HCT116 (cell line): ENCODE measurements at regions of chr14 and their contacts with region 1.

Region 1: DNA sequence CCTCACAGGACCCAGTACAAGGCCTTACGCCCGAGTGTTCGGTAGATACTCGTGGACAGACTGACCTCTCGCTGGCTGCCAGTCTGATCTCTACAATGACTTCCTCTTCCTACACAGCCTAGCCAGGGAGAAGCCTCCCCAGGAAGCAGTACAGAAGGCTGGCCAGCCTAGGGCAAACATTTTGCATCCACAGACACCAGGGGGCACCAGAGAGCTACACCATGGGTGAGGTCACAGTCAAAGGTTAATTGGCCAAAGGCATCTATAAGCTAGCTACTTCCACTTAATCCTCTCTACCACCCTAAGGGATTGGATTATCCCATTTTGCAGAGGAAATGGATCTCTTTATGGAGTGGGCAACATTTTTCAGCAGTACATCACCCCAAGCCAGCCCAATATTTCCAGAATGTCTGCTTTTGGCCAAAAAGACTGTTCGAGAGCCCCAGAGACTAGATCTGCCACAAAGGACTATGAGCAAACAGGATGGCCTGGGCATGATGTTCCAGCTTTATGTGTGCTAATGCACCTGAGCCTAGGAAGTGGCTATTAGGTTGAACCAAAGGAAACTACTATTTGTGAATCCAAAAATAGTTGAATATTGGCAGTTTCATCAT is 14.6 kb upstream of the PNMA1 start:
- DNase-seq: peak; percentile 61
- ATAC-seq: peak; percentile 93
- H3K4me3 ChIP-seq: no peak overlapping the region
- H3K27ac ChIP-seq: 0 out of 2 replicates have a peak overlapping the region, but pooled peaks have one; percentile 1
- H3K4me1 ChIP-seq: peaks cover 3 to 21% of the 10 kb centered on the region in 2 experiments; a peak in 3 of 4 replicates
- H3K27me3 ChIP-seq: no peaks in the 10 kb centered on the region
- CTCF ChIP-seq: peak; percentile 78 to 93 (median 91)
- POLR2A ChIP-seq: no peak
- RAD21 ChIP-seq: peak; percentile 98

Region 2: DNA sequence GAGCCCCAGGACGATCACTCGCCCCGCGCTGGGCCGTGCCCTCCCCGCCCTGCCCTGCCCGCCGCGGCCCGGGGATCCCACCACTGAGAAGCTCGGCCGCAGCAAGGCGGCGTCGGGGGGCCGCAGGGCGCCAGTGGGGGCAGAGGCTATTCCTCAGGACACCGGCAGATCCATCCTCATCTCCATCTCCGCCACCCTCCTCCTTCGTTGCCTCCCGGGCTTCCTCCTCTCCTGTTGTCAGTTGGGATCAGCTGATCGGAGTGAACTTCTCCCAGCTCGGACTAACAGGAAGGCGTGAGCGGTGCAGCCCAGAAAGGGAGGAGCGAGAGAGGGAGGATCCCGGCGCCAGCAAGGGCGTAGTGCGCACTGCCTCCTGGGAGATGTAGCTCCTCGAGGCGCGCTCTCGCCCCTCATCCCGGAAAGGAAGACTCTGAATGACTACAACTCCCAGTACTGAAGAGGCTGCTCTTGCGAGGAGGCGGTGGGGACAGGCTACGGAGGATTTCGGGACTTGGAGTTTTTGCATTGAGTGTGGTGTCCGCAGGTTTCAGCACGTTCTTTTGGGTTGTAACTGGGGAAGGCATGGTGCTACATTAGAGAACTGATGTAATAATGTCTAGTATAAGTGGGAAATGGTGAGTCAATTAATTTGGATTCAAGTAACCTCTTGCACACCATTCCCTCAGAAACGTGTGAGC is 701.8 kb before region 1 on chr14 and contains the start of gene ZFYVE1:
- CTCF ChIA-PET with region 1: no interaction called
- POLR2A ChIA-PET with region 1: no interaction called
- RAD21 ChIA-PET with region 1: no interaction called
- intact Hi-C with region 1: no loop called
- DNase-seq: peak; percentile 95
- ATAC-seq: peak; percentile 99
- H3K4me3 ChIP-seq: peak within 1 kb of the TSS; percentile 67 to 84
- H3K27ac ChIP-seq: peak within 1 kb of the TSS; percentile 28; the same call in 1 of the 2 replicates
- H3K4me1 ChIP-seq: peaks cover 3 to 22% of the 10 kb centered on the region in 2 experiments; a peak in 3 of 4 replicates
- H3K27me3 ChIP-seq: no peaks in the 10 kb centered on the region
- CTCF ChIP-seq: no peak
- POLR2A ChIP-seq: no peak
- RAD21 ChIP-seq: no peak
- total RNA-seq, gene ZFYVE1: 7.7 TPM

Region 3: GRCh38 chr14:73741386-73741875 is 12.6 kb after region 1 on chr14:
- CTCF ChIA-PET with region 1: interaction called, 10 read pairs
- POLR2A ChIA-PET with region 1: interaction called, 3 read pairs
- RAD21 ChIA-PET with region 1: interaction called, 3 to 5 read pairs
- intact Hi-C with region 1: no loop called
- DNase-seq: no peak
- ATAC-seq: peak; percentile 67
- H3K4me3 ChIP-seq: peak overlapping the region; percentile 37 to 52
- H3K27ac ChIP-seq: peak overlapping the region; percentile 84
- H3K4me1 ChIP-seq: peaks cover 66 to 72% of the 10 kb centered on the region in 2 experiments
- H3K27me3 ChIP-seq: no peaks in the 10 kb centered on the region
- CTCF ChIP-seq: no peak
- POLR2A ChIP-seq: no peak
- RAD21 ChIP-seq: no peak

Region 4: DNA sequence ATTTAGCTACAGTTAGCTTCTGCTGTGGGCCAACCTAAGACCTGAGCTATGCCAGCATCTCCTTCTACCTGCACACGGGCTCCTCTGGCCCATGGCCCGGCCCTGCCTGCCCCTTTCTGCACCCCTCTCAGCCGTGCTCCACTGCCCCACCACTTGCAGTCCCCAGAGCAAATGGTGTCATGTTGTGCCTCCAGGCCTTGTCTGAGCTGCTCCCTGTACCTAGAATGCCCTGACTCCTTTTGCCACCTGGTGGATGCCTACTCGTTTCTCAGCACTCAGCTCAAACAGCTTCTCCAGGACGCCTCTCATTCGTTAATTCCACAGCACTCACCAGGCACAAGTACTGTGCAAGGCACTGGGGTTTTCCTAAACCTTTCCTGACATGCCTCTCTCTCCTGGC is 48.6 kb after region 1 on chr14:
- CTCF ChIA-PET with region 1: interaction called, 16 read pairs
- POLR2A ChIA-PET with region 1: no interaction called
- RAD21 ChIA-PET with region 1: interaction called in 1 of 2 experiments, 5 read pairs
- intact Hi-C with region 1: no loop called
- DNase-seq: no peak
- ATAC-seq: peak; percentile 63; the same call in 1 of the 2 replicates
- H3K4me3 ChIP-seq: no peak overlapping the region
- H3K27ac ChIP-seq: no peak overlapping the region
- H3K4me1 ChIP-seq: peaks cover 1 to 5% of the 10 kb centered on the region in 2 experiments; a peak in 3 of 4 replicates
- H3K27me3 ChIP-seq: no peaks in the 10 kb centered on the region
- CTCF ChIP-seq: peak; percentile 14 to 16 (median 15); a peak in 1 of 6 replicates
- POLR2A ChIP-seq: no peak
- RAD21 ChIP-seq: peak; percentile 56

Region 5: DNA sequence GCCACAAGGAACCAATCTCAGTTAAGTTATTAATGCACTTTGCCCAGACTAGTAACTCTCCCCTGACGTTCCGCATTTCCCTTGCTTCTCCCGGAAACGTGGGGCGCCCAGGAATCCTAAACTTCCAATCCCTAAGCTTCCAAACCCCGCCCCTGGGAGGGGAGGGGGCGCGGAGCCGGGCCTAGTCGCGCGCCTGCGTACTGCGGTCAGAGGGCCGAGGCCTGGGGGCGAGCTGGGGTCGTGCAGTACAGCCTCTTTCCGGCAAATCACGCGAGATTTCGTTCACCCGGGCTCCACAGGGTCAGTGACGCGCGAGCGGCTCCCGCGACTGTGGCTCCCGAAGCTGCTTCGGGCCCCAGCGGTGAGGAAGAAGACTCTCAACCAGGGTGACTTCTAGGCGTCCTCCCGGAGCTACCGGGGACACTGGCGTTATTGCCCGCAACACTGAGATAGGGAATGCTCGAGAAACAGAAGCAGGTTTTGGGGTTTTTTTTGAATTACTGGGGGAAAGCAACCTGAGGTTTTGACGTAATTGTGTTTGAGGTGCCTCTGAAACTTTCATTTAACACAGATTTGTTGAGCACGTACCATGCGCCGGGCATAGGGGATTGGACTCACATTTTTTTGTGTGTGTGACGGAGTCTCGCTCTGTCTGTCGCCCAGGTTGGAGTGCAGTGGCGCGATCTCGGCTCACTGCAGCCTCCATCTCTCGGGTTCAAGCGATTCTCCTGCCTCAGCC is 123.0 kb after region 1 on chr14 and contains the start of gene PTGR2:
- CTCF ChIA-PET with region 1: interaction called, 20 read pairs
- POLR2A ChIA-PET with region 1: no interaction called
- RAD21 ChIA-PET with region 1: interaction called, 4 read pairs
- intact Hi-C with region 1: no loop called
- DNase-seq: peak; percentile 94
- ATAC-seq: peak; percentile 89
- H3K4me3 ChIP-seq: peak within 1 kb of the TSS; percentile 81 to 94
- H3K27ac ChIP-seq: peak within 1 kb of the TSS; percentile 97
- H3K4me1 ChIP-seq: peaks cover 17 to 30% of the 10 kb centered on the region in 2 experiments
- H3K27me3 ChIP-seq: no peaks in the 10 kb centered on the region
- CTCF ChIP-seq: 0 out of 6 replicates have a peak, but pooled peaks of 1 of the 3 experiments have one; percentile 4
- POLR2A ChIP-seq: peak; percentile 69
- RAD21 ChIP-seq: 0 out of 2 replicates have a peak, but pooled peaks have one; percentile 6
- total RNA-seq, gene PTGR2: 22.1 TPM

Region 6: GRCh38 chr14:73935666-73936065 is 206.8 kb after region 1 on chr14:
- CTCF ChIA-PET with region 1: interaction called, 6 read pairs
- POLR2A ChIA-PET with region 1: no interaction called
- RAD21 ChIA-PET with region 1: no interaction called
- intact Hi-C with region 1: loop called (anchors 5 kb)
- DNase-seq: no peak
- ATAC-seq: peak; percentile 67
- H3K4me3 ChIP-seq: no peak overlapping the region
- H3K27ac ChIP-seq: no peak overlapping the region
- H3K4me1 ChIP-seq: no peaks in the 10 kb centered on the region
- H3K27me3 ChIP-seq: no peaks in the 10 kb centered on the region
- CTCF ChIP-seq: peak in 2 of 3 experiments; percentile 26 to 50; a peak in 3 of 6 replicates
- POLR2A ChIP-seq: no peak
- RAD21 ChIP-seq: peak; percentile 25; the same call in 1 of the 2 replicates

Region 7: DNA sequence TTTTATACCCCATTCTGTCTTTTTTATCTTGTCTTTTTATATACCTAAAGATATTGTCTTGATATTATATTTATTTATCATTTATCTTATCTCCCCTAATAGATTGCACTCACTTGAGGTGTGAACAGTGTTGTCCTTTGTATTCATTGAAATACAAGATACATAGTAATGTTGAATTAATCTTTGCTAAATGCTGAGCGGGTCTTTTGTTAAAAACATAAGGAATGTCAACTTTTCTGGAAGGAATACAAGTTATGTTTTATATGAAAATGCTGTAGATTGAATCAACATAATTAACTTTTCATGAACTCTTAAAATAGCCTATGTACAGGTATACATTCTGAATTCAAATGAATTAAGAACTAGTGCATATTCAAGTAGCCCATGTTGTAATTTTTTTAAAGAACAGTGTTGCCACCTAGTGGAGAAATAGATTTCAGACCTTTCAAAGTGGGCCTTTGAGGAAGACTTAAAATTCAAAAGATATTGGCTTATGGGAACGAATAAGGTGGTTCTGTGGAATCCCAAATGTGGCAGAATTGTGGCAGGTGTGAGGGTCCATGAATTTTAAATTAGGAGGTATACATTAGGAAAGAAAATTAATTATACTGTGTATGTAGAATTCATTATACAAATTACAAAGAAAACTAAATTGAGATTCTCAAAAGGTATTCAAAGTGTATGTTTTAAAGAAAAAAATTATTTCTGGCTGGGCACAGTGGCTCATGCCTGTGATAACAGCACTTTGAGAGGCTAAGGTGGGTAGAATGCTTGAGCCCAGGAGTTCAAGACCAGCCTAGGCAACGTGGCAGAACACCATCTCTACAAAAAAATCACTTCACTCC is 309.4 kb after region 1 on chr14:
- CTCF ChIA-PET with region 1: interaction called, 5 read pairs
- POLR2A ChIA-PET with region 1: no interaction called
- RAD21 ChIA-PET with region 1: no interaction called
- intact Hi-C with region 1: loop called (anchors 1 kb)
- DNase-seq: no peak
- ATAC-seq: peak; percentile 79
- H3K4me3 ChIP-seq: no peak overlapping the region
- H3K27ac ChIP-seq: no peak overlapping the region
- H3K4me1 ChIP-seq: no peaks in the 10 kb centered on the region
- H3K27me3 ChIP-seq: no peaks in the 10 kb centered on the region
- CTCF ChIP-seq: peak; percentile 46 to 78 (median 55); a peak in 5 of 6 replicates
- POLR2A ChIP-seq: no peak
- RAD21 ChIP-seq: peak; percentile 77